Thyroid gland (tissue), 4 donors: ENCODE measurements at regions of chr3 and their contacts with region 1.

Region 1: GRCh38 chr3:169668957-169669681 is 5.6 kb upstream of the MECOM start:
- DNase-seq: peak; percentile 59 to 67
- H3K4me3 ChIP-seq: peak overlapping the region in 1 of 3 donors; percentile 21
- H3K27ac ChIP-seq: no peak overlapping the region
- H3K4me1 ChIP-seq: peaks cover 0 to 16% of the 10 kb centered on the region in 2 donors
- H3K27me3 ChIP-seq: peaks cover 40% of the 10 kb centered on the region
- CTCF ChIP-seq: peak in 5 of 6 experiments; percentile 14 to 81 (median 43)
- POLR2A ChIP-seq: no peak

Region 2: DNA sequence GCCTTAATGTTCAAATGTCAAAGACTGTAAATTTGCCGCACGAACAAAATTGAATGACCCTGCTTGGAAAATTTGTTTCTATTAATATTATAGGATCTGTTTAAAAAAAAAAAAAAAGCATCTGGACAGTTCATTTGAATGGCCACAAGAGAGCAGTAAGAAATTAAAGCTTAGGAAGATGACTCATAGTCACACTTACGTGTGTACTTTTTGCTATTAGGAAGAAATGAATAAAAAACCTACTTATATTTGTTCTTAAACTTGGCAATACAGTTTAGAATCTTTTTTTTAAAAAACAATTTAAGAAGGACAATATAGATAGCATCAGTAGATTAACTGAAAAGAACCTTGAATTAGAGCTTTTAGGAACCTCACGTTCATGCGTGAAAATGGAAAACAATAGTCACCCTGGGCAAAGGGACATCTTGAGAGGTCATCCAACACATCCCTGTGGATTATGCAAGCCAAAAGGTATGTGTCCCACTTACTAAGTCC is 627.4 kb before region 1 on chr3:
- intact Hi-C with region 1: loop called (anchors 10 kb)
- DNase-seq: no peak
- H3K4me3 ChIP-seq: no peak overlapping the region
- H3K27ac ChIP-seq: no peak overlapping the region
- H3K4me1 ChIP-seq: no peaks in the 10 kb centered on the region
- H3K27me3 ChIP-seq: no peaks in the 10 kb centered on the region
- CTCF ChIP-seq: peak in 5 of 6 experiments; percentile 12 to 63 (median 46)
- POLR2A ChIP-seq: no peak